ENCODE measurements at regions of chr4 and their contacts with region 1.

Region 1: DNA sequence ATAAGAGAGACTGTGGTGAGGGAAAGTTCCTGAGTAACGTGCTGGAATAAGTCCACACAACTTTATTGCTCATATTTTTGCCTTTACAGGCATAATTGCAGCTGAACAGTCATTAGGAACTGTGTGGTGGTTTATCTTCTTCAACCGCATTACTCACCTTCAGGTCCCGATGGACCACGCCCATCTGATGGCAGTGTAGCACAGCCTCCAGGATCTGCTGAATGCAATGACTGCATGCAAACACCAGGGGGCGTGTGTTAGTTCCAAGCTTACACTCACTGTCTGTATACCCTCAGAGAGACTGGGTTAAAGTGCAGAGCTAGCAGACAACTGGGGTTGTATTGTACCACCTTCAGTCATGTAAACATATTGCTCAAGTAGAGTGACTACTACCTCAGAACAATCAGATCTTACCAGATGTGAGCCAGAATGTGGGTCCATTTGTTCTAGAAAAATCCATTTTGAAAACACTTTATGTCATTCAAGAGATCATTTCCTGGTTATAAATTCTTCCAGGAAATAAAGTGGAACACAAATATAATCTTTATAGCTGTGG is 214.0 kb downstream of the CAMK2D start:
- DNase-seq: peak; percentile 95
- H3K4me3 Mint-ChIP-seq: peak overlapping the region; percentile 12
- H3K27ac Mint-ChIP-seq: peak overlapping the region; percentile 21
- H3K4me1 Mint-ChIP-seq: peaks cover 21% of the 10 kb centered on the region
- H3K27me3 Mint-ChIP-seq: no peaks in the 10 kb centered on the region

Region 2: GRCh38 chr4:113394730-113395530 is 152.6 kb before region 1 on chr4:
- CTCF ChIA-PET with region 1: interaction called, 8 read pairs
- POLR2A ChIA-PET with region 1: no interaction called
- intact Hi-C with region 1: loop called (anchors 1 kb)
- DNase-seq: peak; percentile 43
- H3K4me3 Mint-ChIP-seq: no peak overlapping the region
- H3K27ac Mint-ChIP-seq: no peak overlapping the region
- H3K4me1 Mint-ChIP-seq: peaks cover 6% of the 10 kb centered on the region
- H3K27me3 Mint-ChIP-seq: peaks cover 2% of the 10 kb centered on the region

Region 3: GRCh38 chr4:113607998-113608397 is 60.4 kb after region 1 on chr4:
- CTCF ChIA-PET with region 1: no interaction called
- POLR2A ChIA-PET with region 1: no interaction called
- intact Hi-C with region 1: loop called (anchors 1 kb)
- DNase-seq: no peak
- H3K4me3 Mint-ChIP-seq: no peak overlapping the region
- H3K27ac Mint-ChIP-seq: no peak overlapping the region
- H3K4me1 Mint-ChIP-seq: peaks cover 36% of the 10 kb centered on the region
- H3K27me3 Mint-ChIP-seq: no peaks in the 10 kb centered on the region

Region 4: GRCh38 chr4:113673450-113673849 is 125.9 kb after region 1 on chr4:
- CTCF ChIA-PET with region 1: interaction called, 4 read pairs
- POLR2A ChIA-PET with region 1: no interaction called
- intact Hi-C with region 1: loop called (anchors 1 kb)
- DNase-seq: peak; percentile 74
- H3K4me3 Mint-ChIP-seq: no peak overlapping the region
- H3K27ac Mint-ChIP-seq: peak overlapping the region; percentile 58
- H3K4me1 Mint-ChIP-seq: peaks cover 47% of the 10 kb centered on the region
- H3K27me3 Mint-ChIP-seq: no peaks in the 10 kb centered on the region

Region 5: DNA sequence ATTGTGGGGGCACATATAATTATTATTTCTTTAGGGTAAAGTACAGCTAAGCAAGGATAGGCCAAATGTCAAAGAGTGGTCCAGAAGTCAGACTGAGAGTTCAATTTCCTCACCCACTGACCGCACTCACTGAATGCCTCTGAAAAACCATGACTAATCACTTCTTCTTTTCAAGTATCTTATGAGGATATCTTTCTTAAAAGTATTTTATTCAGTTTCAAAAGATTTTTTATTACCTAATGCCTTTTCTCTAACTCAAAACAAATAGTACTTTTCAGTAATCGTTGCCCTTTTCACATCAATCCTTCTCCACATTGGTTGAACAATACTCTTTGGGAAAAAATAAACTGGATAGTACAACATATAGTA is 275.7 kb after region 1 on chr4:
- CTCF ChIA-PET with region 1: interaction called, 3 read pairs
- POLR2A ChIA-PET with region 1: interaction called, 3 read pairs
- intact Hi-C with region 1: loop called (anchors 2 kb)
- DNase-seq: peak; percentile 18
- H3K4me3 Mint-ChIP-seq: no peak overlapping the region
- H3K27ac Mint-ChIP-seq: no peak overlapping the region
- H3K4me1 Mint-ChIP-seq: peaks cover 45% of the 10 kb centered on the region
- H3K27me3 Mint-ChIP-seq: no peaks in the 10 kb centered on the region

Region 6: DNA sequence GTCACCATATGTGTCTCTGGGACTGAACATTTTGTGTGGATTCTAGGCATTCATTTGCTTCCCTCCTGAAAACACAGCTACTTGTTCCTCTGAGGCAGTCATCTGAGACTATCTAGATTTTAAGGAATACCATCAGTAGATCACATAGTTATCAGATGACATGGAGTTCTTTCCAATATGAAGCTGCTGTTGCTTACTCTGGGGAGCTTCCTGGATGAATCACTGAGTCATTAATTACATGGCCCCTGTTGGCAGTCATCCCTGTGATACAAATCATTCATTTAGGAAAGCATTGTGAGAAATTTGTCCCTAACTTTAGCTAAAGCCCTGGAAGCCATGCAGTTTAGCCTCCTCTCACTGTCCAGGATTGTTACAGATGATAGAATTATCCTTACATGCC is 530.0 kb after region 1 on chr4:
- CTCF ChIA-PET with region 1: no interaction called
- POLR2A ChIA-PET with region 1: no interaction called
- intact Hi-C with region 1: loop called (anchors 10 kb)
- DNase-seq: no peak
- H3K4me3 Mint-ChIP-seq: no peak overlapping the region
- H3K27ac Mint-ChIP-seq: no peak overlapping the region
- H3K4me1 Mint-ChIP-seq: no peaks in the 10 kb centered on the region
- H3K27me3 Mint-ChIP-seq: no peaks in the 10 kb centered on the region